H1 (cell line): ENCODE measurements at regions of chr15 and their contacts with region 1.

Region 1: DNA sequence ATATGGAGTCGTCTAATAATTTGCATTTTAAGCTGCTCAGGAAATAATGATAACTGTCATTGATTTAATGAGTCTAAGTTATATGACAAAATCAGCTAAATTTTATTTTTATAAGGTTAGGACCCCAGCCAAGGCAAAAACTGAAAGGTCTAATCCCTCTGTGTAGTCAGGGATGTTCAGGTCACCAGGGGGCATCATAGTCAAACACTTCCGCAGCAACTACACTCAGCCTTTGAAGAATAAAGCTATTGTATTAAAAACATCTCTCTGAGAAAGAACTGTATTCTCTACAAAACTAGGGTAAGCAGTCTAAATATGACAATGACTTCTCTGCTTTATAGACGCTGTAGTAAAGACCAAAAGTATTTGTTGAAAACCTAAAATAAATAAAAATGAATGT is 15.0 kb downstream of the INTS14 start:
- DNase-seq: no peak
- H3K4me3 ChIP-seq: no peak overlapping the region
- H3K27ac ChIP-seq: no peak overlapping the region
- H3K4me1 ChIP-seq: no peaks in the 10 kb centered on the region
- H3K27me3 ChIP-seq: no peaks in the 10 kb centered on the region
- CTCF ChIP-seq: peak in 2 of 3 experiments; percentile 43 to 44; a peak in 2 of 4 replicates
- EP300 ChIP-seq: no peak
- POLR2A ChIP-seq: no peak
- RAD21 ChIP-seq: peak; percentile 70 to 71

Region 2: GRCh38 chr15:65580287-65580686 is 15.7 kb before region 1 on chr15:
- CTCF ChIA-PET with region 1: interaction called, 13 read pairs
- POLR2A ChIA-PET with region 1: interaction called, 4 read pairs
- DNase-seq: no peak
- H3K4me3 ChIP-seq: no peak overlapping the region
- H3K27ac ChIP-seq: no peak overlapping the region
- H3K4me1 ChIP-seq: no peaks in the 10 kb centered on the region
- H3K27me3 ChIP-seq: no peaks in the 10 kb centered on the region
- CTCF ChIP-seq: no peak
- EP300 ChIP-seq: no peak
- POLR2A ChIP-seq: no peak
- RAD21 ChIP-seq: no peak